ENCODE measurements at regions of chr11 and their contacts with region 1.

Region 1: DNA sequence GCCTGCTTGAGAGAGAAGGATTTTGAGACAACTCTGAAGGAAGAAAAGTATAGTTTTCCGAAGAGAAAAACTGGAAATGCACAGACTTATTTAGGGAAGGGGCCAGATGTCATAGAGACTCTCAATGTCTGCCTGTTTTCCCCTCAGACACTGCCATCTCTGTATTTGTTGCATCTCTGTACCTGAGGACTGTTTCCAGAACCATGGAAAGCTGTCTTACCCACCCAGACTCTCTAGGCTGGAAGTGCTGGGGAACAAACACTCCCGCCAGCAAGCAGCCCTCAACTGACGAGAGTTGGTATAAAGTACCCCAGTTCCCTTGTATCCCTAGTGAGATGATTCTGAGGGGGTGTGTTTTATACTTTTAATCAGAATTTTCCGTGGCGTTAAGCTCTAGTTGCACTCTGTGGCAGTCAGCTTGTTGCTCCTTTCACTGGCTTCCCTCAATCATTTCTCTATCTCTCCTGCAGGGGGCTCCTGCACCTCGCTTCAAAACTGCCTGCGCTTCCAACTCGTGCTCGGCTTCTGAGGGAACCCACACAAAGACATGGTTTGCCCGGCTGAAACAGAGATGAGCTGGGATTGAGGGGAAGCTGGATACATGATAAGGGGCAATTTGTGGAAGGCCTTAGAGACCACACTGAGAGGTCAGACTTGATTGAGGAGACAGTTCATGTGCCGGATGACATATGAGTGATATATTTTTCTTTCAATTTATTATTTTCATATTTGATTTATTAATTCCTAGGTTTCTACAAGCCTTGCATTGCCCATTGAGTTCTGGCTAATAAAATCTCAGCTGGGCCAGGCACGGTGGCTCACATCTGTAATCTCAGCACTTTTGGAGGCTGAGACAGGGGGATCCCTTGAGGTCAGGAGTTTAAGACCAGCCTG is 36.9 kb upstream of the CLPB start:
- DNase-seq: peak; percentile 12
- H3K4me3 ChIP-seq: no peak overlapping the region
- H3K27me3 ChIP-seq: peaks cover 24% of the 10 kb centered on the region
- CTCF ChIP-seq: peak; percentile 87

Region 2: GRCh38 chr11:72454791-72455190 is 16.5 kb before region 1 on chr11:
- CTCF ChIA-PET with region 1: interaction called, 43 read pairs
- POLR2A ChIA-PET with region 1: no interaction called
- DNase-seq: no peak
- H3K4me3 ChIP-seq: no peak overlapping the region
- H3K27me3 ChIP-seq: peaks cover 14% of the 10 kb centered on the region
- CTCF ChIP-seq: 0 out of 2 replicates have a peak, but pooled peaks have one; percentile 11

Region 3: GRCh38 chr11:72483412-72484186 is 12.3 kb after region 1 on chr11:
- CTCF ChIA-PET with region 1: interaction called, 24 read pairs
- POLR2A ChIA-PET with region 1: no interaction called
- DNase-seq: no peak
- H3K4me3 ChIP-seq: no peak overlapping the region
- H3K27me3 ChIP-seq: peaks cover 4% of the 10 kb centered on the region
- CTCF ChIP-seq: no peak

Region 4: GRCh38 chr11:72537051-72537450 is 65.8 kb after region 1 on chr11:
- CTCF ChIA-PET with region 1: interaction called, 11 read pairs
- POLR2A ChIA-PET with region 1: no interaction called
- DNase-seq: no peak
- H3K4me3 ChIP-seq: no peak overlapping the region
- H3K27me3 ChIP-seq: peaks cover 8% of the 10 kb centered on the region
- CTCF ChIP-seq: no peak

Region 5: GRCh38 chr11:72642884-72643511 is 171.7 kb after region 1 on chr11:
- CTCF ChIA-PET with region 1: interaction called, 23 read pairs
- POLR2A ChIA-PET with region 1: no interaction called
- DNase-seq: no peak
- H3K4me3 ChIP-seq: peak overlapping the region; percentile 39
- H3K27me3 ChIP-seq: peaks cover 25% of the 10 kb centered on the region
- CTCF ChIP-seq: peak; percentile 74